PC-3 (cell line): ENCODE measurements at regions of chr18 and their contacts with region 1.

Region 1: DNA sequence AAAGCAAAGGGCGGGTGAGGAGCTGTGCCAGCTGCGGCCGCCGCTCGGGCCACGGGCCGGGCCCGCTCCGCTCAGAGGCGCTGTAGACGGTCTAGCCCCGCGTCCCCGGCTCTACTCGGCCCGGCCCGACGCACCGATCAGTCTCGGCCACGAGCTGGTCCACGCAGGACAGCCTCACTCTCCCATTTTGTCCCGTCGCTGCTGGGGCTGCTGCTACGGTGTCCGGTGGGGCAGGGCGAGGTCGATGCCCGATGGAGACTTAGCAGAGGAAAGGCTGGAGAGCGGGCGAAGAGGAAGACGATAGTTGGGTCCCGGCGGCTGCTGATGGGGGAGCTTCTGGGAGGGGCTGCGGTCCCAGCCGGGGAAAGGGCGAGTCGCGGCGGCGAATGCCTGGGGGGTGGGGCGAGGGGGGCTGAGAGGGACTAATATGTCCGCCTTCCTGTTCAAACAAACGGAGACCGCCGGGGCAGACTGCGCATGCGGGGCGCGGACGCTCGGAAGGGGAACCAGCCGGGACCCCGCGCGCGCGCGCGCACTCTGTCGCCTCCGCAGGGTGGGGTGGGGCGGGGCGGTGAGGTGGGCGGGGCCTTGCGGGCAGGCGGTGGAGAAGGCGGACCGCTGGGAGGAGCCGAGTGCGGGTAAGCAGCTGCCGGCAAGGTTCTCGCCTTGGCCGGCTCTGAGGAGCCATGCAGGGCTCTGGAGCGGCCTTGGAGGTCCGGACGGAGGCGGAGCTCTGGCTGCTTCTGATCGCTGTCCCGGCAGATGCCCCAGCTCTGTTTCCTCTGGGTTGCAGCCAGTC is at the start of gene ROCK1:
- DNase-seq: peak; percentile 93
- ATAC-seq: peak; percentile 94
- H3K4me3 ChIP-seq: peak within 1 kb of the TSS; percentile 99
- H3K27ac ChIP-seq: peak within 1 kb of the TSS; percentile 83
- H3K4me1 ChIP-seq: peaks cover 15% of the 10 kb centered on the region
- H3K27me3 ChIP-seq: no peaks in the 10 kb centered on the region
- CTCF ChIP-seq: no peak
- total RNA-seq, gene ROCK1: 22.2 and 37.0 TPM in 2 replicates

Region 2: DNA sequence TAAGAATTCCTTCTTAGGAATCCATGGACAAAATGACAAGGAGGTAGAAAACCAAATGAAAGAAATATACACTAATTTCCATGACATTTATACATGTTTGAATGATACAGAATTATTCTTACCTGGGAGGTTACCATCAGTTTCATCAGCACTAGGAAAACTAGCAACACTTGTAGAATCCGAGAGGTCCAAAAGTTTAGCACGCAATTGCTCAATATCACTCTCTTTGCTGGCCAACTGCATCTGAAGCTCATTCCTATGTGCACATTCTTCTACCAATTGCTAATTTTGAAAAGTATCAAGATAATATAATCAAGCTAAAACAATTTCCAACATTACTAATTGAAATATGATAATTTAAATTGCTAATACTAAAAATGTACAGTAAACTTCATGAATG is 144.7 kb before region 1 on chr18:
- CTCF ChIA-PET with region 1: no interaction called
- POLR2A ChIA-PET with region 1: no interaction called
- intact Hi-C with region 1: loop called (anchors 10 kb)
- DNase-seq: no peak
- ATAC-seq: no peak
- H3K4me3 ChIP-seq: no peak overlapping the region
- H3K27ac ChIP-seq: no peak overlapping the region
- H3K4me1 ChIP-seq: no peaks in the 10 kb centered on the region
- H3K27me3 ChIP-seq: no peaks in the 10 kb centered on the region
- CTCF ChIP-seq: no peak

Region 3: GRCh38 chr18:21012308-21012707 is 99.2 kb before region 1 on chr18:
- CTCF ChIA-PET with region 1: no interaction called
- POLR2A ChIA-PET with region 1: no interaction called
- intact Hi-C with region 1: loop called (anchors 2 kb)
- DNase-seq: no peak
- ATAC-seq: no peak
- H3K4me3 ChIP-seq: no peak overlapping the region
- H3K27ac ChIP-seq: no peak overlapping the region
- H3K4me1 ChIP-seq: peaks cover 8% of the 10 kb centered on the region; the same call in 1 of the 2 replicates
- H3K27me3 ChIP-seq: no peaks in the 10 kb centered on the region
- CTCF ChIP-seq: no peak

Region 4: GRCh38 chr18:21064347-21064746 is 47.2 kb before region 1 on chr18:
- CTCF ChIA-PET with region 1: no interaction called
- POLR2A ChIA-PET with region 1: no interaction called
- intact Hi-C with region 1: loop called (anchors 5 kb)
- DNase-seq: no peak
- ATAC-seq: no peak
- H3K4me3 ChIP-seq: no peak overlapping the region
- H3K27ac ChIP-seq: no peak overlapping the region
- H3K4me1 ChIP-seq: no peaks in the 10 kb centered on the region
- H3K27me3 ChIP-seq: no peaks in the 10 kb centered on the region
- CTCF ChIP-seq: no peak

Region 5: DNA sequence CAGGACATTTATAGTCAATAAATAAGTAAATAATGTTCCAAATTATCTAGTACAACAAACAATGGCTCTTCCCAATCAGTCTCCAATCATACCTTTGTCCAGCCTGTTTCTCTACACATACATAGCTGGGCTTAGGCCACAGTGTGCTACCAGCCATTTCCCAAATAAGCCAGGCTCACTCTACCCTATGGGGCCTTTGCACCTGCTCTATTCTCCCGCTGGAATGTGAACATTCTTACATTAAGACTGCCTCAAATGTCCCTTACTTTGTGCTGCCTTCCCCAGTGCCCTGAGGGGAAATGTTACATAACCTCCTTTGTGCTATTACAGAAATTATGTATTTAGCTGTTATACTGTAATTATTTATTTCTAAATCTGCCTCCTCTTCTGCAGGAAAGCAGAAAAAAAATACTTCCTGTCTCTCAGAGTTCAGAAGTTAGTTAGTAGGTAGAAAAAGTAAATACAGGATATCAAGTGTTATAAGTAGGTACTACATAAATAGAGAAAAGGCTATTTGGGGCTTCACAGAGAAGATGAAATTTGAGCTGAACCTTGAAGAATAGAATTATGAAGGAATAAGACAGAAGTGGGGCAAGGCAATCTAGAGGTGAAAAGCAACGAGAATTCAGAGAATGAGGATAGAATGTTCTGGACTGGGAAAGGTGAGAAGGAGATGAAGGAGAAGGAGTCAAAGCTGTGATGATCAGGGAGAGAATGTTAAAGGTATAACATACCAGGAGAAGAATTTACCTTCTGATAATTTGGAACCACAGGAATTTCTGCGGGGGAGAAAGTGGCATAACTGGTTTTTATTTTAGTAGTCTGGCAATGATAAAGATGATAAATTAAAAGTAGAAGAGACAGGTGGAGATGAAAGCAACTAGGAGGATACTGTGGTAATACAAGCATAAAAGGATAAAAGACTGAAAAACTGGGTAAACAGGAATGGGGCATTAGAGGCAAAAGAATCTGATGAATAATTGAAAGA is 36.9 kb before region 1 on chr18:
- CTCF ChIA-PET with region 1: interaction called, 9 read pairs
- POLR2A ChIA-PET with region 1: interaction called, 6 read pairs
- intact Hi-C with region 1: loop called (anchors 5 kb)
- DNase-seq: peak; percentile 88
- ATAC-seq: peak; percentile 71
- H3K4me3 ChIP-seq: peak overlapping the region; percentile 35; the same call in 1 of the 2 replicates
- H3K27ac ChIP-seq: no peak overlapping the region
- H3K4me1 ChIP-seq: peaks cover 22% of the 10 kb centered on the region
- H3K27me3 ChIP-seq: no peaks in the 10 kb centered on the region
- CTCF ChIP-seq: no peak

Region 6: DNA sequence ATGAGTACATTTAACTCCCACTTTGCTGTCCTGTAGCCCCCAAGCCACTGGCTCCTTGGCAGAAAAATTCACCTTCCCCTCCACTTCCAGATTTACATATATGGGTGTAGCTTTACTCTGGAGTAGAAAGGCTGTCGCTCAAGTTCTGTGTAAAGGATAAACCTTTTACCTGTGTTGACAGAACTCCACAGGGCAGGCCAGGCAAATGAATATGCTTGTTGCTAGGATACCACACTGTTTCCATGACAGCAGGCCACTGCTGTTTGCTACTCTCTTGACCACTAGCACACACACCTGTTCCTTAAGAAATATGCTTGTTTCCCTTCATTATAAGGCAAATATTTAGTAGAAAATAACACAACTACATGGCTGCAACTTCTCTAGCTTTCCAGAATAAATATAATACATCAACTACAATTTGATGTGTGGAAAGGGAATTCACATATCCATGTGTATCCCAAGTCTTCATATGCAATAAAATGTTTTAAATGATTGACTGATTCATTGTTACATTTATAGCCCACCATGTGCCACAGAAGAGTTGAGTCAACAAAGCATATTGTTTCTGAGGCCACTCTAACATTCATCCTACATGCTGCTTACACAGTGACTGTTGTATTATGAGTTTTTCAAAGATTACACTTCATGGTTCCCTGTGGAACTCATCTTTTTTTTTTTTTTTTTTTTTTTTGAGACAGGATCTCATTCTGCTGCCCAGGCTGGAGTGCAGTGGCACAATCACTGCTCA is 56.3 kb after region 1 on chr18:
- CTCF ChIA-PET with region 1: no interaction called
- POLR2A ChIA-PET with region 1: no interaction called
- intact Hi-C with region 1: loop called (anchors 5 kb)
- DNase-seq: peak; percentile 80
- ATAC-seq: peak; percentile 52
- H3K4me3 ChIP-seq: no peak overlapping the region
- H3K27ac ChIP-seq: peak overlapping the region; percentile 57; the same call in 1 of the 2 replicates
- H3K4me1 ChIP-seq: peaks cover 42% of the 10 kb centered on the region
- H3K27me3 ChIP-seq: no peaks in the 10 kb centered on the region
- CTCF ChIP-seq: no peak